WTC11 (cell line): ENCODE measurements at regions of chr9 and their contacts with region 1.

Region 1: GRCh38 chr9:137423004-137423874 is at the starts of genes EXD3 and NOXA1:
- DNase-seq: peak; percentile 95
- ATAC-seq: peak; percentile 91
- H3K4me3 Mint-ChIP-seq: peak within 1 kb of the TSS; percentile 88
- H3K27ac Mint-ChIP-seq: 0 out of 2 replicates have a peak within 1 kb of the TSS, but pooled peaks have one; percentile 78
- H3K4me1 Mint-ChIP-seq: peaks cover 7% of the 10 kb centered on the region
- H3K27me3 Mint-ChIP-seq: no peaks in the 10 kb centered on the region; the same call in 1 of the 2 replicates
- CTCF ChIP-seq: peak; percentile 66; the same call in 1 of the 2 replicates
- total RNA-seq, gene EXD3: 20.4 to 23.1 TPM (median 21.2 TPM) in 3 replicates
- total RNA-seq, gene NOXA1: 2.9 to 5.9 TPM (median 4.8 TPM) in 3 replicates

Region 2: DNA sequence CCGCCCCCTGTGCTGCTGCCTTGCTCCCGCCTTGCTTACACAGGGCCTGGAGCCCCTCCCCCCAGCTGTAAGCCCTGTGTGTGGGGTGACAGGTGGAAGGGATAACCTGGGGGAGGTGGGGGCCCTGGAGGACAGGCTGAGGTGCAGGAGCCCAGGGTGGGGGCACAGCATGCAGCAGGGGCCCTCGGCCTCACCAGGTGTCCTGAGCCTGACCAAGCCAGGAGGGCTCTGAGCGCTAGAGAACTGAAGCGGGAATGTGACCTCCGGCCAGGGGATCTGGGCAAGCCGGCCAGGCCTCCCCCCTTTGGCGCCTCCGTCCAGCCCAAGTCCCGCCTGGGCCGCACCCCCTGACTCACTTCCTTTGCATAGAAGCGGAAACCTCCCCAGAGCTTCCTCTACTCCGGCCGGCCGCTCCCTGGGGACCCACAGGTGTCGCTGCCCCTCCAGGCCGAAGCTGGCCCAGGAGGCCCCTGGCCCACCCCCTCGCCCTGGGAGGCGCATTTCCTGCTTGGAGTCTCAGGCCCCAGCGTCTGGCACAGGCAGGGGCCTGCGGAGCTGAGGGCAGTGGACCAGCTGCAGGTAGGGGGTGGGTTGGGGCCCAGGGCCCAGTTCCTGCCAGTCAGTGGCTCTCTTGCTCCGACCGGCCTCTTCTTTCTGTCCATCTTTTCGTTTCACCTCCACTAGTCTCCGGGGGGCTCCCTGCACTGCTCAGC is 145.8 kb before region 1 on chr9 and contains the start of gene TOR4A:
- CTCF ChIA-PET with region 1: interaction called, 17 read pairs
- POLR2A ChIA-PET with region 1: no interaction called
- DNase-seq: peak; percentile 76
- ATAC-seq: peak; percentile 36
- H3K4me3 Mint-ChIP-seq: peak within 1 kb of the TSS; percentile 62
- H3K27ac Mint-ChIP-seq: peak within 1 kb of the TSS; percentile 90
- H3K4me1 Mint-ChIP-seq: peaks cover 25% of the 10 kb centered on the region
- H3K27me3 Mint-ChIP-seq: peaks cover 8% of the 10 kb centered on the region
- CTCF ChIP-seq: no peak
- total RNA-seq, gene TOR4A: 7.3 to 11.8 TPM (median 11.3 TPM) in 3 replicates

Region 3: DNA sequence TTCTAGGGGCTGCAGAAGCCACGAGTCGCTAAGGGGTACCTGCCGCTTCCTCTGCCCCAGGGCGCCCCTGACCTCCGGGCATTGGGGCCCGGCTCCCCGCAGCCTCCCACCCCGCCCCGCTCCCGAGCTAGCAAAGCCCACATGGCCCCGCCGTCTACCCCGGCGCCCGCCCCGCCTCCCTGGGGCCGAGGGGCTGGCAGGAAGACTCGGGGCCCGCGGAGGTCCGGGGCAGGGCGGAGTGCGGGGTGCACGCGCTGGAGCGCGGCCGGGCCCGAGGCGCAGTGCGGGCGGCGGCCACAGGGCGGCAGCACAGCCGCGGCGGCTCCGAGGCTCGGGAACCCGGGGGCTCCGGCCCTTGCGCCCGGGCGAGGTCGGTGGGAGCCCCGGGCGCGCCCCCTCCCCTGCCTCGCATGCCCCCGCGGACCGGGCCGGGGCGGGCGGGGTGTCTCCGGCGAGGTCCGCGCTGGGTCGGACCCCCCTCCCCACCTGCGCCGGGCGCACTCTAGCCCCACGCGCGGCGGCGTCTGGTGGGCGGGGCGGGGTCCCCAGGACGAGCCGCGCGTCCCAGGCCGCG is 127.9 kb before region 1 on chr9:
- CTCF ChIA-PET with region 1: interaction called, 11 read pairs
- POLR2A ChIA-PET with region 1: no interaction called
- DNase-seq: peak; percentile 71
- ATAC-seq: peak; percentile 53
- H3K4me3 Mint-ChIP-seq: peak overlapping the region; percentile 50
- H3K27ac Mint-ChIP-seq: no peak overlapping the region
- H3K4me1 Mint-ChIP-seq: peaks cover 47% of the 10 kb centered on the region
- H3K27me3 Mint-ChIP-seq: peaks cover 36% of the 10 kb centered on the region
- CTCF ChIP-seq: 0 out of 2 replicates have a peak, but pooled peaks have one; percentile 53

Region 4: DNA sequence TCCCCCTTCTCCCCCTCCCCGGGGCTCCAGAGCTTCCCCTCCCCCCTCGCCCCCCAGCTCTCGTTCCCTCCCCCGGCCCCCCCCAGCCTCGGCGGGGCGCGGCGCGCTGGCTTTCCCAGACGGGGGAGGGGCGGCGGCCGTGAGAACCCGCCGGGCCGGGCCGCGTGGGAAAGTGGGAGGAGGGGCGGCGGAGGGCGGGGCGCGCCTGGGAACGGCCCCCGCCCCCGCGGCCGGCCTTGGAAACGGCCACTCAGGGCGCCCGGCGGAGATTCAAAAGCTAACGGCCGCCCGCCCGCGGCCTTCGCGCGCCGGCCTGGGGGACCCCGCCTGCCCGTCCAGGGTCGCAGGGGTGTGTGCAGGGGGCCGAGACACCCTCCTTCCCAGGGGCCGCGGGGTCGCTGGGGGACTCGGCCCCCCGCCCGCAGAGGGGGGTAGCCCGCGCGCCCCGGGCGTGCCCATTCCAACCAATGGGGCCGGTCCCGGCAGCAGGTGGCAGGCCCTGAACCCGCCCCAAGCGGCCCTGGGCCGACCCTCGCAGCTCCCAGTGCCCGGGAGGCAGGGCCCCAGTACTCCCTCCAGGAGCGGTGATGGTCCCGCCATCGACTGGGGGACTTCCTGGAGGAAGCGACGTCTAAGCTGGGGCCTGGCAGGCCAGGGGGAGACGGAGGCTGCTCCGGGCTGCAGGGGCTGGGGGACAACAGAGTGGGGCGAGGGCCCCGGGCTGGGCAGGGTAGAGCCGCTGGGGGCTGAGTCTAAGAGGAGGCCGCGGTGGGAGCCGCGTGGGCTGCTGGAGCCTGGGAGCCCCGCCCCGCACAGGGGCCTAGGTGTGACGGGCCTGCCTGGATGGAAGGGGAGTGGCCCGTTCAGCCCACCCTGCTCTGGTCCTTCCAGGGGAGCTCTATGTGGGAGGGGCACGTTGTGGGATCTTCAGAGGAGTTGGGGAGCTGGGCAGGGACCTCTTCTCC is 106.9 kb before region 1 on chr9:
- CTCF ChIA-PET with region 1: interaction called, 11 read pairs
- POLR2A ChIA-PET with region 1: no interaction called
- DNase-seq: peak; percentile 63
- ATAC-seq: peak; percentile 62
- H3K4me3 Mint-ChIP-seq: 0 out of 2 replicates have a peak overlapping the region, but pooled peaks have one; percentile 20
- H3K27ac Mint-ChIP-seq: no peak overlapping the region
- H3K4me1 Mint-ChIP-seq: peaks cover 7% of the 10 kb centered on the region; the same call in 1 of the 2 replicates
- H3K27me3 Mint-ChIP-seq: no peaks in the 10 kb centered on the region
- CTCF ChIP-seq: no peak

Region 5: DNA sequence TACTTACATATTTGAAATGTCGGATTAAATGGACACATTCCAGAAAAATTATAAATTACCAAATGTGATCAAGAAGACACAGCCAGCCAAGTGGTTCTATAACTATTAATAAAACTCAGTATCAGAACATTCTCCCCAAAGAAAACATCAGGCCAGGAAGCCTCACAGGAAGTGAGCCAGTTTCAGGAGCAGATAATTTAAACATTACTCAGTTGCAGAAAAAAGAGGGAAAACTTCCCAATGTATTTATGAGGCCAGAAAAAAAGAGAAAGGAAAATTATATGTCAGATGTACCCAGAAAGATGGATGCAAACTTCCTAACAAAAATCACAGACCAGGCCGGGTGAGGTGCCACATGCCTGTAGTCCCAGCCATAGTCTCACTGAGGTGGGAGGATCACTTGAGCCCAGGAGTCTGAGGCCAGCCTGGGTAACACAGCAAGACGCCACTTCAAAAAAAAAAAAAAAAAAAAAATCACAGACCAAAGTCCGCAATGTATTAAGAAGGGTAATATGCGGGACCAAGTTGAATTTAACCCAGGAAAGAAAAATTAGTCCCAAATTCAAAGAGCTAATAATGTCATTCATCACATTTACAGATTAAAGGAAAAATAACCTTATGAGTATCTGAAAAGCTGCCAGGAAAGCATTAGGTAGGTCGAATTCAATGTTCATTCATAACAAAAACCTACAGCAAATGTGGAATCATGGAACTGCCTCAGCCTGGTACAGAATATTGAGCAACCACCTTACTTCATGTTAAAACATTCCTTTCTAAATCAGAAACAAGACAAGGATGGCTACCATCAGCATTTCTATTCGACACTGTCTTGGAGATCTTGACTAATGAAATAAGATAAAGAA is 84.0 kb before region 1 on chr9:
- CTCF ChIA-PET with region 1: no interaction called
- POLR2A ChIA-PET with region 1: no interaction called
- DNase-seq: no peak
- ATAC-seq: no peak
- H3K4me3 Mint-ChIP-seq: no peak overlapping the region
- H3K27ac Mint-ChIP-seq: no peak overlapping the region
- H3K4me1 Mint-ChIP-seq: no peaks in the 10 kb centered on the region
- H3K27me3 Mint-ChIP-seq: peaks cover 30% of the 10 kb centered on the region
- CTCF ChIP-seq: no peak

Region 6: DNA sequence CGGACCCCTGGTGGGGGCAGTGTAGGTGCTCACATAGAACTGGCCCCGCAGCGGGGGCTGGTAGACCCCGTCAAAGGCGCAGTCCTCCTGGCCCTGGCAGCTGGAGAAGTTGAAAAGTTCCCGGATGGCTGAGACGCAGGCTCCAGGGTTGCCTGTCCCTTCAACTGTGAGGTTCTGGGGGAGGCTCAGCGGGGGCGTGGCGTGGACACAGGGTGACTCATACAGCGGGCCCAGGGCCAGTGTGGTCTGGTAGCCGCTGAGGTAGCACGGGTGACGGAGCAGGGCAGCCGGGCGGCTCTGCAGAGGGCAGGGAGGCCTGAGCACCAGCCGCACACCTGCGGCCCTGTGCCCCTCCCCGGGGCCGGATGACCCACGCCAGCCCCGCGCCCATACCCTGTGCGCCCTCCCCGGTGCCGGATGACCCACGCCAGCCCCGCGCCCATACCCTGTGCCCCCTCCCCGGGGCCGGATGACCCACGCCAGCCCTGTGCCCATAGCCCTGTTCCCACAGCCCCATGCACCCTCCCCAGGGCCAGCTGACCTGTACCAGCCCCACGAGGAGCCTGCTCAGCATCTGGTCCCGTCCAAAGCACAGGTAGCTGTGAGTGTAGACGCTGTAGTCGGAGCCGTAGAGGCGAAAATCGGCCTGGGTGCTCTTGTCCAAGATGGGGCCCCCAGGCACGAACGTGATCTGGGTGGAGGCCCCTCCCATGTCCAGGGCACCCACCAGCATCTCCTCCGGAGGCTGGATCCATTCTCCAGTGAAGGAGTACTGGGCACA is 12.9 kb after region 1 on chr9:
- CTCF ChIA-PET with region 1: interaction called, 38 read pairs
- POLR2A ChIA-PET with region 1: interaction called, 5 read pairs
- DNase-seq: peak; percentile 11
- ATAC-seq: no peak
- H3K4me3 Mint-ChIP-seq: no peak overlapping the region
- H3K27ac Mint-ChIP-seq: no peak overlapping the region
- H3K4me1 Mint-ChIP-seq: no peaks in the 10 kb centered on the region
- H3K27me3 Mint-ChIP-seq: no peaks in the 10 kb centered on the region
- CTCF ChIP-seq: no peak

Region 7: DNA sequence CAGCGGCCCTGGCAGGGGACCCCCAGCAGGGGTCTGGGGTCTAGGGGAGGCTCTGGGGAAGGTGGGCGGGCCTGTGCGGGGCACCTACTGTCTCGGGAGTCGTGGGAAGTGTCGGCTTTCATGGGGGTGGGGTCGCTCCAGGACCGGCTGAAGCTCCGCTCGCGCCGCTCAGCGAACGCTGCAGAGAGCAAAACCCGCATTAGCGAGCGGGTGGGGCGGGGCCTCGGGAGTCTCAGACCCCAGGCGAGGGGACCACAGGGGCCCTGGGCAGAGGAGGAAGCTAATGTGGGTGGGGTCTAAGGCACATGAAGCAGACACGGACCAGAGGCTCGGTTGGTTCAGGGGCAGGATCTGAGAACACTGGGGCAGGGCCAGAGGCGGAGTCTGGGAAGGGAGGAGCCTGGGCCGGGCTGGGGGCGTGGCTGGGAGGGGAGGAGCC is 30.4 kb after region 1 on chr9:
- CTCF ChIA-PET with region 1: interaction called, 16 read pairs
- POLR2A ChIA-PET with region 1: interaction called, 11 read pairs
- DNase-seq: peak; percentile 87
- ATAC-seq: peak; percentile 96
- H3K4me3 Mint-ChIP-seq: peak overlapping the region; percentile 73
- H3K27ac Mint-ChIP-seq: no peak overlapping the region
- H3K4me1 Mint-ChIP-seq: peaks cover 6% of the 10 kb centered on the region
- H3K27me3 Mint-ChIP-seq: no peaks in the 10 kb centered on the region
- CTCF ChIP-seq: no peak

Region 8: DNA sequence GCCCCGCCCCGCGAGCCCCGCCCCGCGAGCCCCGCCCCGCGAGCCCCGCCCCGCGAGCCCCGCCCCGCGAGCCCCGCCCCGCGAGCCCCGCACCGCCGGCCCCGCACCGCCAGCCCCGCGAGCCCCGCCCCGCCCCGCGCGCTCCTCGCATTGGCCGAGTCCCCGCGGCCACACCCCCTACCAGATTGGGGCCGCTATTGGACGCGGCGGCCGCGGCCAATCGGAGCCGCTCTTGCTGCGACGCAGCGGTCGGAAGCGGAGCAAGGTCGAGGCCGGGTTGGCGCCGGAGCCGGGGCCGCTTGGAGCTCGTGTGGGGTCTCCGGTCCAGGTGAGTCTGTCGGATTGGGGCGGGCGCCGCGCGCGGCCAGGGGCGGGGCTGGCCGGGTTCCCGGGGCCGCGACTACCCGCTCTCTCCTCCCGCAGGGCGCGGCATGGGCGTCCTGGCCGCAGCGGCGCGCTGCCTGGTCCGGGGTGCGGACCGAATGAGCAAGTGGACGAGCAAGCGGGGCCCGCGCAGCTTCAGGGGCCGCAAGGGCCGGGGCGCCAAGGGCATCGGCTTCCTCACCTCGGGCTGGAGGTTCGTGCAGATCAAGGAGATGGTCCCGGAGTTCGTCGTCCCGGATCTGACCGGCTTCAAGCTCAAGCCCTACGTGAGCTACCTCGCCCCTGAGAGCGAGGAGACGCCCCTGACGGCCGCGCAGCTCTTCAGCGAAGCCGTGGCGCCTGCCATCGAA is 128.6 kb after region 1 on chr9 and contains the start of gene MRPL41:
- CTCF ChIA-PET with region 1: interaction called, 11 read pairs
- POLR2A ChIA-PET with region 1: no interaction called
- DNase-seq: peak; percentile 90
- ATAC-seq: peak; percentile 85
- H3K4me3 Mint-ChIP-seq: peak within 1 kb of the TSS; percentile 87
- H3K27ac Mint-ChIP-seq: peak within 1 kb of the TSS; percentile 88
- H3K4me1 Mint-ChIP-seq: peaks cover 7% of the 10 kb centered on the region
- H3K27me3 Mint-ChIP-seq: no peaks in the 10 kb centered on the region; the same call in 1 of the 2 replicates
- CTCF ChIP-seq: no peak
- total RNA-seq, gene MRPL41: 70.1 to 79.4 TPM (median 74.8 TPM) in 3 replicates

Region 9: DNA sequence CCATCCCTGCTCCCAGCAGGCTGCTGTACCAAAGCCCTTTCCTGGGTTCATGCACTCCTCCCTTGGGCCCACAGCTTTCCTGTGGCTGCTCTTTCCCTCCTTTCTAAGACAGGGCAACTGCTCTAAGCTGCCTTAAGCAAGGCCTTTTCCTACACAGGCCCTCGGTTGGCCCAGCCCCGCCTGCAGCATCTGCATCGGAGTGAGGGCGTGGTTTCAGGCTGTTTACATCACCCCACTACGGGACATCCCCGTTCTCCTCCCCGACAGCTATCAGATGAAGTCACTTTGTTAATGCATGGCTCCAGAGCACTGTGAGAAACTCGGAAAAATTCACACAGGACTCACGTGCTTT is 152.1 kb after region 1 on chr9:
- CTCF ChIA-PET with region 1: no interaction called
- POLR2A ChIA-PET with region 1: no interaction called
- DNase-seq: no peak
- ATAC-seq: no peak
- H3K4me3 Mint-ChIP-seq: no peak overlapping the region
- H3K27ac Mint-ChIP-seq: peak overlapping the region; percentile 68
- H3K4me1 Mint-ChIP-seq: peaks cover 22% of the 10 kb centered on the region
- H3K27me3 Mint-ChIP-seq: no peaks in the 10 kb centered on the region
- CTCF ChIP-seq: no peak